GM12878 (cell line): ENCODE measurements at regions of chr1 and their contacts with region 1.

Region 1: DNA sequence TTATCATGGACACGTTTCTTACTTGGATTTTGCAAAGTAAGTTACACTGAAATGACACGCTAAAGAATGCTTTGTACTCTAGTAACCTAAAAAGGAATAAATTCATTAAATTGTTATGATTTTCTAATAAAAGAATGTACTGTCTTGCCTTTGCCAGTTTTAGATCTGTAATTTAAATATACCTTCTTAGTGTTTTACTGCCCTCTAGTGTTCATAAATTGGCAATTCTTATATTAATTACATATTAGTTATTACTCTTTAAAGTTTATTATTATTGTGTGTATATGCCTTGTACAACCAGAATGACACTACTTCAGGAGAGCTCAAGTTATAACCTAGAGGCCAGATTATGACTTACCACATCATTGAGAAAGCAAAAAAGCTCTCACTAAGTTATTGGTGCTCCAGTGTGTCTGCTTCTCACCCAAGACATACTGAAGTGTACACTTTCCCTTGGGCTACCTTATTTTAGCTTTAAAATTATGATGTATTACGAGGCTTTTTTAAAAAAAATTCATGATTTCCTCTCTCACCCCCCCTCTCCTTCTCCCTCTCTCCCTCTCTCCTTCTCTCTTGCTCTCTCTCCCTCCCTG is 169.9 kb downstream of the HS2ST1 start:
- DNase-seq: no peak
- ATAC-seq: peak; percentile 83
- H3K4me3 ChIP-seq: no peak overlapping the region
- H3K27ac ChIP-seq: no peak overlapping the region; the same call in 1 of the 2 replicates
- H3K4me1 ChIP-seq: peaks cover 3% of the 10 kb centered on the region; the same call in 1 of the 2 replicates
- H3K27me3 ChIP-seq: no peaks in the 10 kb centered on the region
- CTCF ChIP-seq: peak in 2 of 3 experiments; percentile 27 to 34; a peak in 2 of 6 replicates
- EP300 ChIP-seq: no peak
- POLR2A ChIP-seq: no peak
- RAD21 ChIP-seq: peak; percentile 66

Region 2: GRCh38 chr1:86380257-86380861 is 704.0 kb before region 1 on chr1:
- CTCF ChIA-PET with region 1: interaction called, 7 read pairs
- POLR2A ChIA-PET with region 1: no interaction called
- RAD21 ChIA-PET with region 1: interaction called, 5 read pairs
- SMC1A ChIA-PET with region 1: interaction called, 5 read pairs
- in situ Hi-C with region 1: loop called (anchors 25 kb)
- intact Hi-C with region 1: loop called (anchors 10 kb)
- DNase-seq: peak; percentile 45
- ATAC-seq: peak; percentile 78
- H3K4me3 ChIP-seq: 0 out of 2 replicates have a peak overlapping the region, but pooled peaks have one; percentile 3
- H3K27ac ChIP-seq: 0 out of 2 replicates have a peak overlapping the region, but pooled peaks have one; percentile 6
- H3K4me1 ChIP-seq: no peaks in the 10 kb centered on the region
- H3K27me3 ChIP-seq: no peaks in the 10 kb centered on the region
- CTCF ChIP-seq: peak; percentile 64 to 84 (median 66); a peak in 5 of 6 replicates
- EP300 ChIP-seq: no peak
- POLR2A ChIP-seq: no peak
- RAD21 ChIP-seq: peak; percentile 86

Region 3: DNA sequence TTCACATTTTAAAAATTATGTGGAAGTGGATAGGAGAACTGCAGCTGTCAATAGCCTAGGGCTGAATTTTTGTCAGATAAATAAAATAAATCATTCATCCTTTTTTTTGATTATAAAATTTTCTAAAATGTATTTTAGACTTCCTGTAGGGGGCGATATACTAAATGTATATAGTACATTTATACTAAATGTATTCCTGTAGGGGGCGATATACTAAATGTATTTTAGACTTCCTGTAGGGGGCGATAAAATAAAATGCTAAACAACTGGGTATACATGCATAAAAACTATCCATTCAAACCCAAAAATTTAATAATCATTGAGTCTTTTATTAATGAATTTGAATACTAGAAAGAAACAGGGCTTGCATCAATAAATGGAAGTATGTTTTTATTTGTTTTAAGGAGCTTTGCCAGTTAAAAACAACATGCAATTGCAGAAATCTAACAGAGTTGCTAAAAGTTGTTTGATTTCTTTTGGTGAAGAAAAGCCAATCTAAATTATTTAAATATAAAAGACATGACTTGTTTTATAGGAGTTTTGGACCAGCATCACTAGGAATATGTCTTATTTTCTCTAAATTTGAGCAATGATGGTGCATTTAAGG is 584.2 kb before region 1 on chr1:
- CTCF ChIA-PET with region 1: no interaction called
- POLR2A ChIA-PET with region 1: no interaction called
- RAD21 ChIA-PET with region 1: no interaction called
- SMC1A ChIA-PET with region 1: no interaction called
- in situ Hi-C with region 1: loop called (anchors 25 kb)
- intact Hi-C with region 1: loop called (anchors 10 kb)
- DNase-seq: no peak
- ATAC-seq: peak; percentile 41; the same call in 1 of the 3 replicates
- H3K4me3 ChIP-seq: no peak overlapping the region
- H3K27ac ChIP-seq: no peak overlapping the region
- H3K4me1 ChIP-seq: no peaks in the 10 kb centered on the region
- H3K27me3 ChIP-seq: peaks cover 0 to 2% of the 10 kb centered on the region in 2 experiments; a peak in 2 of 4 replicates
- CTCF ChIP-seq: peak; percentile 65 to 90 (median 82); a peak in 5 of 6 replicates
- EP300 ChIP-seq: no peak
- POLR2A ChIP-seq: no peak
- RAD21 ChIP-seq: no peak

Region 4: DNA sequence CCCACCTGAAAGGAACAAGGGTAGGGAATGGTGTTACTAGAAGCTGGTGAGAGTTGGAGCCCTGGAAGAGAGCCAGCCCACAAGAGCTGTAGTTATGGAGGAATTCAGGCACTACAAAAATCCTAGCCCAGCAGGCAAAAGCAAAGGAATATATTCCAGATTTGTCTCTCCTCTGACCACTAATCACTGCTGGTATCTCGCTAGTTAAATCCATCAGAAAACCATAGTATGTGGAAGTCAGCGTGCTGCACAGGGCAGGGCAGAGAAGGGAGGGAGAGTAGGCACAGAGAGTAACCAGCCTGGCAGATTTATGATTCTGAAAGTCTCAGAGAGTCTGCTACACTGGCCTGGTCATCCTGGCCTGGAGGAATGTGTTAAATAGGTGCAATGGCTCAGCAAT is 259.0 kb before region 1 on chr1:
- CTCF ChIA-PET with region 1: interaction called, 198 read pairs
- POLR2A ChIA-PET with region 1: no interaction called
- RAD21 ChIA-PET with region 1: interaction called, 5 read pairs
- SMC1A ChIA-PET with region 1: interaction called, 14 read pairs
- in situ Hi-C with region 1: no loop called
- intact Hi-C with region 1: no loop called
- DNase-seq: no peak
- ATAC-seq: no peak
- H3K4me3 ChIP-seq: no peak overlapping the region
- H3K27ac ChIP-seq: no peak overlapping the region
- H3K4me1 ChIP-seq: no peaks in the 10 kb centered on the region
- H3K27me3 ChIP-seq: no peaks in the 10 kb centered on the region
- CTCF ChIP-seq: no peak
- EP300 ChIP-seq: no peak
- POLR2A ChIP-seq: no peak
- RAD21 ChIP-seq: no peak

Region 5: GRCh38 chr1:86965012-86965826 is 119.1 kb before region 1 on chr1:
- CTCF ChIA-PET with region 1: interaction called, 78 read pairs
- POLR2A ChIA-PET with region 1: no interaction called
- RAD21 ChIA-PET with region 1: interaction called, 40 read pairs
- SMC1A ChIA-PET with region 1: interaction called, 68 read pairs
- in situ Hi-C with region 1: no loop called
- intact Hi-C with region 1: loop called (anchors 5 kb)
- DNase-seq: no peak
- ATAC-seq: peak; percentile 81
- H3K4me3 ChIP-seq: no peak overlapping the region
- H3K27ac ChIP-seq: peak overlapping the region; percentile 8; the same call in 1 of the 2 replicates
- H3K4me1 ChIP-seq: peaks cover 4% of the 10 kb centered on the region; the same call in 1 of the 2 replicates
- H3K27me3 ChIP-seq: no peaks in the 10 kb centered on the region
- CTCF ChIP-seq: peak; percentile 26 to 51 (median 47); a peak in 4 of 6 replicates
- EP300 ChIP-seq: no peak
- POLR2A ChIP-seq: no peak
- RAD21 ChIP-seq: peak; percentile 59; the same call in 1 of the 2 replicates

Region 6: DNA sequence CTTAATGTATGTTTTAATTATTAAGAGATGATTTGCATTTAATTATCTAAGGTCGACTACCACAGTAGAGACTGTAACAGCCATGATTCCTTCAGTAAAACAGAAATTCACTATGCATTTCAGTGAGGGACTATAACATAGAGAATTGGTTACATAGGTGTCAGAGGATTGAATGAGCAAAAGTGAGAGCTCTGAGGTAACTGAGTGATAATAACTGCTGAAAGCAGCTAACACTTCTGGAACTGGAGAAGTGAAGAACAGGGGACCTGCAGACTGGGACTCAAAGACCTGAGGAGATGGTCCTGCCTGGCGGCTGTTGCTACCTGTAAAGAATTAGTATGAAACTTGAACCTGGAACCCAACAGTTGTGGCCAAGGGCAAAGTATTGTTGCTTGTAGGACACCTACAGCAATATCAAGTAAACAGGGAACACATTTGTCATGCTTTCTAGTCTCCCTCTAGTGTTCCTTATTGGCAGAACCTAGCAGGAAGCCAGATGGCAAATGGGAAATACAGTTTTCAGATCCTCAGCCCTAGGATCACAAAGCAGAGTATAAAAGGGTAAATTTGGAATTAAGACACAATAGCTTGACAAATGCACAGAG is 59.3 kb before region 1 on chr1:
- CTCF ChIA-PET with region 1: interaction called, 9 read pairs
- POLR2A ChIA-PET with region 1: no interaction called
- RAD21 ChIA-PET with region 1: interaction called, 9 read pairs
- SMC1A ChIA-PET with region 1: interaction called, 17 read pairs
- in situ Hi-C with region 1: no loop called
- intact Hi-C with region 1: loop called (anchors 5 kb)
- DNase-seq: no peak
- ATAC-seq: peak; percentile 92
- H3K4me3 ChIP-seq: no peak overlapping the region
- H3K27ac ChIP-seq: no peak overlapping the region
- H3K4me1 ChIP-seq: peaks cover 5% of the 10 kb centered on the region; the same call in 1 of the 2 replicates
- H3K27me3 ChIP-seq: no peaks in the 10 kb centered on the region
- CTCF ChIP-seq: peak; percentile 35 to 53 (median 51); a peak in 4 of 6 replicates
- EP300 ChIP-seq: no peak
- POLR2A ChIP-seq: no peak
- RAD21 ChIP-seq: peak; percentile 53

Region 7: GRCh38 chr1:87051965-87052364 is 32.4 kb before region 1 on chr1:
- CTCF ChIA-PET with region 1: interaction called, 30 read pairs
- POLR2A ChIA-PET with region 1: no interaction called
- RAD21 ChIA-PET with region 1: interaction called, 43 read pairs
- SMC1A ChIA-PET with region 1: interaction called, 48 read pairs
- in situ Hi-C with region 1: no loop called
- intact Hi-C with region 1: no loop called
- DNase-seq: no peak
- ATAC-seq: peak; percentile 76
- H3K4me3 ChIP-seq: peak overlapping the region; percentile 1; the same call in 1 of the 2 replicates
- H3K27ac ChIP-seq: no peak overlapping the region; the same call in 1 of the 2 replicates
- H3K4me1 ChIP-seq: peaks cover 8% of the 10 kb centered on the region; the same call in 1 of the 2 replicates
- H3K27me3 ChIP-seq: no peaks in the 10 kb centered on the region
- CTCF ChIP-seq: no peak
- EP300 ChIP-seq: no peak
- POLR2A ChIP-seq: no peak
- RAD21 ChIP-seq: no peak

Region 8: GRCh38 chr1:87180682-87181081 is 96.3 kb after region 1 on chr1:
- CTCF ChIA-PET with region 1: no interaction called
- POLR2A ChIA-PET with region 1: no interaction called
- RAD21 ChIA-PET with region 1: no interaction called
- SMC1A ChIA-PET with region 1: no interaction called
- in situ Hi-C with region 1: no loop called
- intact Hi-C with region 1: no loop called
- DNase-seq: no peak
- ATAC-seq: no peak
- H3K4me3 ChIP-seq: no peak overlapping the region
- H3K27ac ChIP-seq: no peak overlapping the region
- H3K4me1 ChIP-seq: no peaks in the 10 kb centered on the region
- H3K27me3 ChIP-seq: peaks cover 0 to 2% of the 10 kb centered on the region in 2 experiments; a peak in 1 of 4 replicates
- CTCF ChIP-seq: no peak
- EP300 ChIP-seq: no peak
- POLR2A ChIP-seq: no peak
- RAD21 ChIP-seq: no peak